ENCODE measurements at regions of chr1 and their contacts with region 1.

Region 1: GRCh38 chr1:152459596-152460528 is 45.8 kb upstream of the CRNN start:
- DNase-seq: peak; percentile 83
- H3K4me3 Mint-ChIP-seq: peak overlapping the region; percentile 52
- H3K27ac Mint-ChIP-seq: peak overlapping the region; percentile 31
- H3K4me1 Mint-ChIP-seq: peaks cover 22% of the 10 kb centered on the region
- H3K27me3 Mint-ChIP-seq: no peaks in the 10 kb centered on the region

Region 2: DNA sequence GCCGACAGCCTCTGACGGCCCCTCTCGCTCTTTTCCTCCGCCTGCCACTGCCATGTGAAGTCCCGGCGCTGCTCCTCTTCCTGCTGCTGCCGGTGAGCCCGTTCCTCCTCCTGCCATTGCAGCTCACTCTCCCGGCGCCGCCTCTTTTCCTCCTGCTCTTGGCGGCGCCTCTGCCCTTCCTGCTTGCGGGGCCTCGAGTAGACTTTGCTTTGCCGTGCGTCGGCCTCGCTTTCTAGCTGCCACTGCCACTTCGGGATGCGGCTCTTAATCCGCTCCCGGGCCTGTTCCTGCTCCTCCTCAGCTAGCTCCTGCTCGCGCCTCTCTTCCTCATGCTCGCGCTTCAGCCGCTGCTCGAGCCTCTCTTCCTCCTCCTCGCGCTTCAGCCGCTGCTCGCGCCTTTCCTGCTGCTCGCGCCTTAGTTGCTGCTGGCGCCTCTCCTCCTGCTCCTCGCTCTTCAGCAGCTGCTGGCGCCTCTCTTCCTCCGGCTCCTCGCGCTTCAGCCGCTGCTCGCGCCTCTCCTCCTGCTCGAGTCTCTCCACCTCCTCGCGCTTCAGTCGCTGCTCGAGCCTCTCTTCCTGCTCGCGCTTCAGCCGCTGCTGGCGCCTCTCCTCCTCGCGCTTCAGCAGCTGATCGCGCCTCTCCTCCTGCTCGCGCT is 348.9 kb before region 1 on chr1:
- CTCF ChIA-PET with region 1: interaction called, 15 read pairs
- POLR2A ChIA-PET with region 1: no interaction called
- intact Hi-C with region 1: no loop called
- DNase-seq: peak; percentile 54
- H3K4me3 Mint-ChIP-seq: no peak overlapping the region
- H3K27ac Mint-ChIP-seq: no peak overlapping the region
- H3K4me1 Mint-ChIP-seq: no peaks in the 10 kb centered on the region
- H3K27me3 Mint-ChIP-seq: peaks cover 15% of the 10 kb centered on the region

Region 3: DNA sequence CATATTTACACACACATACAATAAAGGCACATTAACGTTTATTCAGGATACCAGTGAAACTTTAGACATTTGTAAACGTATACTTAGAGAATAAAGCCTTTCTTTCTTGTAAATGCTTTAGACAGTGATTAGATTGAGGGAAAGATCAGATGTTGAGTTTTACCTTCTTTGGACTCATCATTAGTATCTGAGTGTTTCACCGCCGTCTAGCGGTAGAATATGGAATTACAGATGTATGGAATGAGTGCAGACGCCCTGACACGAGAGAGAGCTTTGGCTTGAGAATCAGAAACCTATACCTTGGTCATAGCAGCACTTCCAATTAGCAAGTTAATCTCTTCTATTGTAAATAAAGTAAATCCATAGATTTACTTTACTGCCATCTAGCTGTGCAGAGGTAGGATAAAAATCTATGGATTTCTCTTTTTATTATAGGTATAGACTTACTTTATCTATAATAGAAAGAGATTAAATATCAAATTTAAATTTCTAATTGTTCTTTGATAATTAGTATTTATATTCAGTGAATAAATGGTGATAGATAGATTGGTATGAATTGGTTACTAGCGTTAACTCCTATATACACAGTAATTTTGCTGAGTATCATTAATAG is 112.6 kb before region 1 on chr1:
- CTCF ChIA-PET with region 1: interaction called, 55 read pairs
- POLR2A ChIA-PET with region 1: no interaction called
- intact Hi-C with region 1: loop called (anchors 1 kb)
- DNase-seq: peak; percentile 46
- H3K4me3 Mint-ChIP-seq: no peak overlapping the region
- H3K27ac Mint-ChIP-seq: no peak overlapping the region
- H3K4me1 Mint-ChIP-seq: peaks cover 3% of the 10 kb centered on the region
- H3K27me3 Mint-ChIP-seq: peaks cover 3% of the 10 kb centered on the region

Region 4: DNA sequence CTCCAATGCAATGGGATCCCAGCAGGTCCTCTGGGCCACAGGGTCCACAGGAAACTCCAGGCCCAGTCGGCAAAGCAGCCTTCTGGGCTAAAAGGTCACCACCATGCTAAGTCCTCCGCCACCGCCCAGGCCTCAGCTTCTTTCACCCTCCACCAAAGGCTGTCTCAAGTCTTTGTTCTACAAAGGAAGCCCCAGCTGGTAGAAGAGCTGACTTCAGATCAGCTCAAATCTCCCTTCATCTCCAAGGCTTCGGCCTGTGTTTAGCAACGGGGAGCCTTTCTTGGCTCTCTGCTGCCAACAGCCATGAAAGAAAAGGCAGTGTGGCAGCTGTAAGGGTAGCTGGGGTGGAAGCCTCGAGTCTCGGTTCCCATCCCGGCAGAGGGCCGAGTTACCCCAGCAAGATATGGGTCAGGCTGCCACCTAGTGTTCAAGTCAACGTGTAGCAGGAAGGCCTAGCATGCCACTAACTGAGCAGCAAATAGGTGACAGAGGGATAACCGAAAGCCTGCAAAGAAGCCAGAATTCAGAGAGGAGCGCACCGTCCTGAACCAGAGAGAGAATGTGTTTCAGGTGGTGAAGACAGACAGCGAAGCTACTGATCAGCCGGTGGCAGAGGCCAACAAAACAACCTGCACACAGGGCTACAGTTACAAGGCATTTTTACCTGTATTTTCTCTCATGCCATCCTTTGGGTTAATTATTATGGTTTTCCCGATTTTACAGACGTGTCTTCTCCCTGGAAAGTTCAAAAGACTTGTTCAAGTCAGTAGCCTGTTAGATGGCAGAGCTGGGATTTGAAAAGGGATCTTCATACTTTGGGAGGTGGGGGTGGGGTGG is 19.0 kb before region 1 on chr1:
- CTCF ChIA-PET with region 1: interaction called, 65 read pairs
- POLR2A ChIA-PET with region 1: no interaction called
- intact Hi-C with region 1: loop called (anchors 2 kb)
- DNase-seq: peak; percentile 77
- H3K4me3 Mint-ChIP-seq: no peak overlapping the region
- H3K27ac Mint-ChIP-seq: no peak overlapping the region
- H3K4me1 Mint-ChIP-seq: no peaks in the 10 kb centered on the region
- H3K27me3 Mint-ChIP-seq: peaks cover 21% of the 10 kb centered on the region

Region 5: GRCh38 chr1:152479792-152480595 is 20.1 kb after region 1 on chr1:
- CTCF ChIA-PET with region 1: interaction called, 33 read pairs
- POLR2A ChIA-PET with region 1: no interaction called
- intact Hi-C with region 1: no loop called
- DNase-seq: peak; percentile 77
- H3K4me3 Mint-ChIP-seq: no peak overlapping the region
- H3K27ac Mint-ChIP-seq: no peak overlapping the region
- H3K4me1 Mint-ChIP-seq: peaks cover 13% of the 10 kb centered on the region
- H3K27me3 Mint-ChIP-seq: no peaks in the 10 kb centered on the region

Region 6: GRCh38 chr1:152623203-152623844 is 163.5 kb after region 1 on chr1:
- CTCF ChIA-PET with region 1: no interaction called
- POLR2A ChIA-PET with region 1: no interaction called
- intact Hi-C with region 1: no loop called
- DNase-seq: peak; percentile 44
- H3K4me3 Mint-ChIP-seq: no peak overlapping the region
- H3K27ac Mint-ChIP-seq: no peak overlapping the region
- H3K4me1 Mint-ChIP-seq: peaks cover 2% of the 10 kb centered on the region
- H3K27me3 Mint-ChIP-seq: peaks cover 27% of the 10 kb centered on the region